Transverse colon (tissue), 4 donors: ENCODE measurements at regions of chr9 and their contacts with region 1.

Region 1: DNA sequence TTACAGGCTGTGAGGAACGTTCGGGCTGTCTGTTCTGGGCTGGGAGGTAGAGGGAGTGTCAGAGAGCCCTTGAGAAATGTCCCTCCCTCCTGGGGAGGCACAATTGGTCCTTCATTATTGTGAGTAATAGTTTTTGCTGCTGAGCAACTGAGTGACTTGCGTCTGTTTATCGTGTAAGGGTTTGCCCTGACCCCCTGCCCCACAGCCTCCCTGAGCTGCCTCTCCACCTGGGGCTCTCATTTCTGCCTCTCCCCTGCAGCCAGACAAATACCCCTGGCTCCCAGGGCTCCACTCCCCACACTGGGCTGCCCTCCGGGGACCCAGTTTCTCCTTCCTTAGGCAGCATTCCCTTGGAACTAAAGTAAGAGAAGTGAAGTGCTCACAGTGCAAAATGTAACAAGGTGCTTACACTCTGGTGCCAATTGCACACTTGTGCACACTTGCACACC is 174.9 kb upstream of the MVB12B start:
- DNase-seq: peak; percentile 21
- H3K4me3 ChIP-seq: peak overlapping the region in 1 of 4 donors; percentile 4
- H3K27ac ChIP-seq: peak overlapping the region; percentile 12 to 54 (median 28)
- H3K4me1 ChIP-seq: peaks cover 0 to 19% (median 14%) of the 10 kb centered on the region in 4 donors
- H3K27me3 ChIP-seq: no peaks in the 10 kb centered on the region
- CTCF ChIP-seq: no peak
- EP300 ChIP-seq: no peak
- POLR2A ChIP-seq: no peak

Region 2: DNA sequence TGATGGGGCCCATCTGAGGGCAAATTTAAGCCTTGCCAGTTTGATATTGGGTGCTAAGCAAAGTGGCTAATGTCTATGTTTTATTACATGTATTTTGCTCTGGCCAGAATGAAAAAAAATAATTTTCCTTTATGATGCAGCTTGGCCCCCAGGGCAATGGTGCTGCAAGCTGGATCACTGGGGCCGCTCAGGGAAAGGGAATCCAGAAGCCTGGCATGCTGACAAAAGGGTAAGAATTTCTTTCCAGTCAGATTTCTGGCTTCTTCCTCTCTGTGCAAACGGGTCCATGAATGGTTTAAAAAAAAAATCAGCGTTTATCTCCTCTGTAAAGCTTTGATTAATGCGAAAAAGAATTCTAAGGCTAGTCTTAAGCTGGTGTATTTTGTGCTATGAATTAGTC is 583.1 kb before region 1 on chr9:
- in situ Hi-C with region 1: no loop called
- intact Hi-C with region 1: no loop called
- DNase-seq: no peak
- H3K4me3 ChIP-seq: no peak overlapping the region
- H3K27ac ChIP-seq: no peak overlapping the region
- H3K4me1 ChIP-seq: peaks cover 0 to 7% (median 2%) of the 10 kb centered on the region in 4 donors
- H3K27me3 ChIP-seq: no peaks in the 10 kb centered on the region
- CTCF ChIP-seq: no peak
- EP300 ChIP-seq: no peak
- POLR2A ChIP-seq: no peak

Region 3: GRCh38 chr9:126036881-126037291 is 114.8 kb before region 1 on chr9:
- in situ Hi-C with region 1: no loop called
- intact Hi-C with region 1: no loop called
- DNase-seq: no peak
- H3K4me3 ChIP-seq: no peak overlapping the region
- H3K27ac ChIP-seq: no peak overlapping the region
- H3K4me1 ChIP-seq: no peaks in the 10 kb centered on the region
- H3K27me3 ChIP-seq: peaks cover 21% of the 10 kb centered on the region
- CTCF ChIP-seq: no peak
- EP300 ChIP-seq: no peak
- POLR2A ChIP-seq: no peak

Region 4: GRCh38 chr9:126114850-126115460 is 36.8 kb before region 1 on chr9:
- in situ Hi-C with region 1: no loop called
- intact Hi-C with region 1: loop called (anchors 1 kb)
- DNase-seq: no peak
- H3K4me3 ChIP-seq: no peak overlapping the region
- H3K27ac ChIP-seq: no peak overlapping the region
- H3K4me1 ChIP-seq: no peaks in the 10 kb centered on the region
- H3K27me3 ChIP-seq: peaks cover 1% of the 10 kb centered on the region
- CTCF ChIP-seq: no peak
- EP300 ChIP-seq: no peak
- POLR2A ChIP-seq: no peak